ENCODE measurements at regions of chrX and their contacts with region 1.

Region 1: GRCh38 chrX:149539283-149540130 is 1.3 kb upstream of the EOLA1 start:
- DNase-seq: peak; percentile 93
- H3K4me3 ChIP-seq: peak overlapping the region in 2 of 3 experiments; percentile 10 to 43
- H3K27ac ChIP-seq: no peak overlapping the region
- H3K4me1 ChIP-seq: peaks cover 5% of the 10 kb centered on the region
- H3K27me3 ChIP-seq: no peaks in the 10 kb centered on the region
- CTCF ChIP-seq: no peak
- POLR2A ChIP-seq: no peak

Region 2: GRCh38 chrX:147911192-147912022 is 1628.1 kb before region 1 on chrX and contains the start of gene FMR1:
- CTCF ChIA-PET with region 1: no interaction called
- POLR2A ChIA-PET with region 1: no interaction called
- dilution Hi-C with region 1: no loop called
- intact Hi-C with region 1: loop called (anchors 10 kb)
- DNase-seq: peak; percentile 91
- H3K4me3 ChIP-seq: peak within 1 kb of the TSS; percentile 62 to 89 (median 88)
- H3K27ac ChIP-seq: peak within 1 kb of the TSS; percentile 77
- H3K4me1 ChIP-seq: peaks cover 13% of the 10 kb centered on the region
- H3K27me3 ChIP-seq: no peaks in the 10 kb centered on the region
- CTCF ChIP-seq: no peak
- POLR2A ChIP-seq: no peak
- total RNA-seq, gene FMR1: 33.3 and 36.4 TPM in 2 replicates

Region 3: DNA sequence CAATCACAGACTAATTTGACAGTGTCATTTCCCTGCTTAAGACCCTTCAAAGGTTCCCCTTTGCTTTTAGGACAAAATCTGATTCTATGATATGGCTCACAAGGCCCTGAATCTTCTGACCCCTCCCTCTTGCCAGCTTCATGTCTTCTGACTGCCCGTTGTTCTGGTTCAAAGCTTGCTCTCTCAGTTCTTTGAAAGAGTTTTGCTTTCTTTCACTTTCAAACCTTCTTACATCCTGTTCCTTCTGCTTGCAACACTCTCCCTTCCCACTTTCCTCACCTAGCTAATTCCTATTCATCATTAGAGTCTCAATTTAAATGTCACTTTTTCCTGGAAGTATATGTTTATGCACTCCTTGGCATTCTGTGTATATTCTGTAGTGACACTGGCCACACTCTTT is 333.6 kb before region 1 on chrX:
- CTCF ChIA-PET with region 1: no interaction called
- POLR2A ChIA-PET with region 1: no interaction called
- dilution Hi-C with region 1: no loop called
- intact Hi-C with region 1: no loop called
- DNase-seq: no peak
- H3K4me3 ChIP-seq: no peak overlapping the region
- H3K27ac ChIP-seq: no peak overlapping the region
- H3K4me1 ChIP-seq: no peaks in the 10 kb centered on the region
- H3K27me3 ChIP-seq: no peaks in the 10 kb centered on the region
- CTCF ChIP-seq: no peak
- POLR2A ChIP-seq: no peak

Region 4: GRCh38 chrX:149306445-149306844 is 233.1 kb before region 1 on chrX:
- CTCF ChIA-PET with region 1: no interaction called
- POLR2A ChIA-PET with region 1: no interaction called
- dilution Hi-C with region 1: no loop called
- intact Hi-C with region 1: no loop called
- DNase-seq: no peak
- H3K4me3 ChIP-seq: no peak overlapping the region
- H3K27ac ChIP-seq: no peak overlapping the region
- H3K4me1 ChIP-seq: no peaks in the 10 kb centered on the region
- H3K27me3 ChIP-seq: no peaks in the 10 kb centered on the region
- CTCF ChIP-seq: no peak
- POLR2A ChIP-seq: no peak

Region 5: DNA sequence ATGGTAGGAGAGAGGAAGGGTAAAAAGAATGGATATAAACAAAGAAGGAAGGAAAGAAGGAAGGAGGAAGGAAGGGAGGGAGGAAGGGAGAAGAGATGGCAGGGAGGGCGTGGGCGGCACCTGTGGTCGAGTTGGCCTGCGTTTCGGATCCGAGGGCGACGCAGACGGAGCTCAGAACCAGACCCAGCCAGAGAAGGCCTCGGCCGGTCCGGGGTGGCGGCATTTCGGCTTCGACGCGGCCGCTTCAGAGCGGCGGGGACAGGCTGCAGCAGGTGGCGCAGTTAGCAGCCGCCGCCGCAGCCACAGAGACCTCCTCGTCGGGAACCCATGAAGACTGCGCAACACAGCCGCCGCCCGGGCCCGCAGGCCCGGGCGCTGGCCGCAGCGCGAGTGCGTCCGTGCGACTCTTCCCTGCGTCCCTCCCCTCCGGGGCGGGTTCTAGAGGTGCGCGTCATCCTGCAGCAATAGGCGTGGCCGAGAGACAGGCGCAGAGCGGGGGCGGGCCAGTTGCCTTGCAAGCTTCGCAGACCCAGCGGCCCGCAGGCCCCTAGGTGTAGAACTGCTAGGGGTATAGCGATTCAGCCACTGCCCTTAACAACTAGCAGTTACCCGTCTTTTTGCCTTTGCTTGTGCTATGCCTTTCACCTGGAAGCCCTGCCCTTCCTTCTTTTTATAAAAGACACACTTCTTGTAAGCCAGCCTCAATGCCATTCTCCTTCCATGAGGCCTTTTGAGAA is 34.4 kb before region 1 on chrX and contains the start of gene IDS:
- CTCF ChIA-PET with region 1: interaction called, 5 read pairs
- POLR2A ChIA-PET with region 1: interaction called, 15 read pairs
- dilution Hi-C with region 1: no loop called
- intact Hi-C with region 1: loop called (anchors 2 kb)
- DNase-seq: peak; percentile 83
- H3K4me3 ChIP-seq: peak within 1 kb of the TSS in 2 of 3 experiments; percentile 41 to 63
- H3K27ac ChIP-seq: peak within 1 kb of the TSS; percentile 44
- H3K4me1 ChIP-seq: peaks cover 17% of the 10 kb centered on the region
- H3K27me3 ChIP-seq: peaks cover 0 to 2% of the 10 kb centered on the region in 2 experiments
- CTCF ChIP-seq: no peak
- POLR2A ChIP-seq: peak; percentile 91
- total RNA-seq, gene IDS: 35.2 and 42.2 TPM in 2 replicates

Region 6: GRCh38 chrX:149512225-149512885 is 27.2 kb before region 1 on chrX:
- CTCF ChIA-PET with region 1: interaction called, 20 read pairs
- POLR2A ChIA-PET with region 1: no interaction called
- dilution Hi-C with region 1: no loop called
- intact Hi-C with region 1: loop called (anchors 1 kb)
- DNase-seq: peak; percentile 55
- H3K4me3 ChIP-seq: no peak overlapping the region
- H3K27ac ChIP-seq: no peak overlapping the region
- H3K4me1 ChIP-seq: peaks cover 15% of the 10 kb centered on the region
- H3K27me3 ChIP-seq: peaks cover 0 to 2% of the 10 kb centered on the region in 2 experiments
- CTCF ChIP-seq: peak; percentile 59 to 62
- POLR2A ChIP-seq: no peak

Region 7: DNA sequence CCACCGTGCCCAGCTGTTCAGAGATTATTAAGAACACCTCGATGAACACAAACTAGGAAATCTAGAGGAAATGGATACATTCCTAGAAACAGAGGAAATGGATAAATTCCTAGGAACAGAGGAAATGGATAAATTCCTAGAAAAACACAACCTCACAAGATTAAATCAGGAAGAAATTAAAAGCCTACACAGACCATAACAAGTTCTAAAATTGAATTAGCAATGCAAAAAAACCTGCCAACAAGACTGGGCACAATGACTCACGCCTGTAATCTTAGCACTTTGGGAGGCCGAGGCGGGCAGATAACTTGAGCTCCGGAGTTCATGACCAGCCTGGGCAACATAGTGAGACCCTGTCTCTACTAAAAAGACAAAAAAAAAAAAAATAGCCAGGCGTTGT is 21.3 kb before region 1 on chrX:
- CTCF ChIA-PET with region 1: no interaction called
- POLR2A ChIA-PET with region 1: no interaction called
- dilution Hi-C with region 1: no loop called
- intact Hi-C with region 1: loop called (anchors 1 kb)
- DNase-seq: peak; percentile 70
- H3K4me3 ChIP-seq: no peak overlapping the region
- H3K27ac ChIP-seq: no peak overlapping the region
- H3K4me1 ChIP-seq: peaks cover 18% of the 10 kb centered on the region
- H3K27me3 ChIP-seq: peaks cover 0 to 4% of the 10 kb centered on the region in 2 experiments
- CTCF ChIP-seq: no peak
- POLR2A ChIP-seq: no peak

Region 8: GRCh38 chrX:149611623-149612175 is 72.2 kb after region 1 on chrX:
- CTCF ChIA-PET with region 1: no interaction called
- POLR2A ChIA-PET with region 1: no interaction called
- dilution Hi-C with region 1: no loop called
- intact Hi-C with region 1: no loop called
- DNase-seq: no peak
- H3K4me3 ChIP-seq: no peak overlapping the region
- H3K27ac ChIP-seq: no peak overlapping the region
- H3K4me1 ChIP-seq: no peaks in the 10 kb centered on the region
- H3K27me3 ChIP-seq: no peaks in the 10 kb centered on the region
- CTCF ChIP-seq: no peak
- POLR2A ChIP-seq: no peak

Region 9: DNA sequence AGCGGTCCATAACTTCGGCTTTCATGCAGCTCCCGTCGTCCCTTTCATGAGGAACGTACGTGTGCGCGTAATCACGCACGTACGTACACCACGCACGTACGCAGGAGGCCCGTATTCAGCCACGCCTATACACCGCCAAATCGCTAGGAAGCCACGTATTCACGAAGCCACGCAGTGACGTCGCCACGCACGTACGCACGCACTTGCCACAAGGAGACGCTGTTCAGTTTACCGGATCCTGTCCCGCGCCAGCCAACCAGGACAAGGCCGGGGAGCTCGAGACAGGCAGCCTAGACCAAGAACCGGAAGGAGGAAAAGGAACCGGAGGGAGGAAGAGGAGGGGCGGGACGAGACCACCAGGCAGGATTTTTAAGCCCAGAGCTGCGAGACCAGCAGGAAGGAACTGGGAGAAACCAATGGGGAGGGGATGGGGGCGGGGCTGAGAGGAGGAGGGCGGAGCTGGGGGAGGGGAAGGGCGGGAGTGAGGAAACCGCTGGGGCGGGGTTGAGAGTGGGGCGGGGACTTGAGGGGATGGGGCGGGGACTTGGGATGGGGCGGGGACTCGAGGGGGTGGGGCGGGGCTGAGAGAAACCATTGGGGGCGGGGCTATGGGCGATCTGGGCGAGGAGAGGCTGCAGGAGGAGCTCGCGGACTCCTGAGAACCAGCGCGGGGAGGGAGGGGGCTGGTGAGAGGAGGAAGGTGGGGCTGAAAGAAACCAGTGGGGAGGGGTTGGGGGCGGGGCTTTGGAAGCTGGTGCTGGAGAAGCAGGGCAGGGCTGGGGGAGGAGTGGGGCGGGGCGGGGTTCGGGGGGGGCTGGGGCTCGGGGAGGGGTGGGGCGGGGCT is 399.1 kb after region 1 on chrX and contains the start of gene EOLA2:
- CTCF ChIA-PET with region 1: interaction called, 9 read pairs
- POLR2A ChIA-PET with region 1: interaction called, 16 read pairs
- dilution Hi-C with region 1: no loop called
- intact Hi-C with region 1: no loop called
- DNase-seq: peak; percentile 99
- H3K4me3 ChIP-seq: peak within 1 kb of the TSS; percentile 7 to 71 (median 29)
- H3K27ac ChIP-seq: peak within 1 kb of the TSS; percentile 36
- H3K4me1 ChIP-seq: peaks cover 2% of the 10 kb centered on the region
- H3K27me3 ChIP-seq: no peaks in the 10 kb centered on the region
- CTCF ChIP-seq: peak; percentile 63 to 65
- POLR2A ChIP-seq: peak; percentile 34
- total RNA-seq, gene EOLA2: 24.3 and 35.5 TPM in 2 replicates

Measured in endothelial cell of umbilical vein (primary cell).